BJ (cell line): ENCODE measurements at regions of chr20 and their contacts with region 1.

Region 1: GRCh38 chr20:4720041-4720976 is 1.4 kb upstream of the PRND start:
- DNase-seq: peak; percentile 46
- H3K4me3 ChIP-seq: no peak overlapping the region
- H3K27me3 ChIP-seq: no peaks in the 10 kb centered on the region; the same call in 1 of the 2 replicates
- CTCF ChIP-seq: peak; percentile 74

Region 2: GRCh38 chr20:4601630-4602296 is 118.5 kb before region 1 on chr20:
- CTCF ChIA-PET with region 1: interaction called, 30 read pairs
- POLR2A ChIA-PET with region 1: no interaction called
- DNase-seq: no peak
- H3K4me3 ChIP-seq: no peak overlapping the region
- H3K27me3 ChIP-seq: no peaks in the 10 kb centered on the region
- CTCF ChIP-seq: no peak

Region 3: DNA sequence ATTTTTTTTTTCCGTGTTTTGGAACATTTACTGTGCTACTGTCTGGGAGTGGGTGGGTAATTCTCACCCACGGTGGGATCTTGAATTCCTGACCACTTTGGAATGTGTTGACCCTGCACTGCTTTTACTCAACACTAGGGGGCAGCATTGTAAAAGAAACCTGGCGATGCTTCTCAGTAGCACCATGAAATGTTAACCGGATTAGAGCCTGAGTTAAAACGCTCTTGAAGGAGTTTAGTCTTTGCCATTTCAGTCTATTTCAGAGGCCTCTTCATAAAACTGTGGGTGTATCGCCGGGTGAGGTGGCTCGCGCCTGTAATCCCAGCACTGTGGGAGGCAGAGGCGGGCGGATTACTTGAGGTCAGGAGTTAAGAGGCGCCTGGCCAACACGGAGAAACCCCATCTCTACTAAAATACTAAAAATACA is 113.0 kb before region 1 on chr20:
- CTCF ChIA-PET with region 1: interaction called, 97 read pairs
- POLR2A ChIA-PET with region 1: no interaction called
- DNase-seq: no peak
- H3K4me3 ChIP-seq: no peak overlapping the region
- H3K27me3 ChIP-seq: no peaks in the 10 kb centered on the region
- CTCF ChIP-seq: peak; percentile 89

Region 4: GRCh38 chr20:4613718-4614620 is 106.3 kb before region 1 on chr20:
- CTCF ChIA-PET with region 1: interaction called, 97 read pairs
- POLR2A ChIA-PET with region 1: no interaction called
- DNase-seq: no peak
- H3K4me3 ChIP-seq: no peak overlapping the region
- H3K27me3 ChIP-seq: no peaks in the 10 kb centered on the region
- CTCF ChIP-seq: peak; percentile 52

Region 5: GRCh38 chr20:4813863-4814695 is 93.8 kb after region 1 on chr20:
- CTCF ChIA-PET with region 1: no interaction called
- POLR2A ChIA-PET with region 1: no interaction called
- DNase-seq: no peak
- H3K4me3 ChIP-seq: no peak overlapping the region
- H3K27me3 ChIP-seq: no peaks in the 10 kb centered on the region; the same call in none of the 2 replicates
- CTCF ChIP-seq: no peak